ENCODE measurements at regions of chr3 and their contacts with region 1.

Region 1: DNA sequence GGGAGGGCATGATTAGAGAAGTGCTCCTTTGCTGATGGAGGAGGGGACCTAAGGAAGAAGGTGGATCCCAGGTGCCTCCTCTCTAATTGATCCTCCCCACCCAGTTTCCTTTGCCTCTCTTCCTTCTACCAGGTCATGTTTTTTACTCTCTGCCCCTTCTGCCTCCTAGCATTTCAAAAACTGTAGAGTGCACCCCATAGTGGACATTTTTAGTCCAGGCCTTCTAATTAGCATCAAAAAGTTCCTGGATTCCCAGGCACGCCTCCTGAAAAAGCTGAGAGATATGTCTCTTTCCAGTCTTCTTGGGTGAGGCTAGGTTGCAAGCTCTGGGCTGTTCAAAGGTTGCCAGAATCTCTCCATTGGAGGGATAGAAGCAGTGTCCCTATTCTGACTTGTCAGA is 18.7 kb upstream of the ITGB5 start:
- DNase-seq: no peak
- H3K4me3 ChIP-seq: no peak overlapping the region
- H3K4me3 Mint-ChIP-seq: no peak overlapping the region
- H3K27ac ChIP-seq: no peak overlapping the region
- H3K27ac Mint-ChIP-seq: peak overlapping the region in 1 of 7 donors; percentile 47
- H3K4me1 ChIP-seq: no peaks in the 10 kb centered on the region
- H3K4me1 Mint-ChIP-seq: peaks cover 1 to 6% (median 3%) of the 10 kb centered on the region in 4 donors
- H3K27me3 ChIP-seq: peaks cover 4% of the 10 kb centered on the region
- H3K27me3 Mint-ChIP-seq: peaks cover 7 to 13% of the 10 kb centered on the region in 2 donors

Region 2: GRCh38 chr3:124768812-124769211 is 137.0 kb before region 1 on chr3:
- CTCF ChIA-PET with region 1: interaction called, 291 read pairs
- POLR2A ChIA-PET with region 1: no interaction called
- intact Hi-C with region 1: no loop called
- DNase-seq: peak in 2 of 5 donors; percentile 7
- H3K4me3 ChIP-seq: no peak overlapping the region
- H3K4me3 Mint-ChIP-seq: no peak overlapping the region
- H3K27ac ChIP-seq: no peak overlapping the region
- H3K27ac Mint-ChIP-seq: no peak overlapping the region
- H3K4me1 ChIP-seq: no peaks in the 10 kb centered on the region
- H3K4me1 Mint-ChIP-seq: no peaks in the 10 kb centered on the region
- H3K27me3 ChIP-seq: peaks cover 4% of the 10 kb centered on the region
- H3K27me3 Mint-ChIP-seq: peaks cover 4 to 13% of the 10 kb centered on the region in 2 donors

Region 3: DNA sequence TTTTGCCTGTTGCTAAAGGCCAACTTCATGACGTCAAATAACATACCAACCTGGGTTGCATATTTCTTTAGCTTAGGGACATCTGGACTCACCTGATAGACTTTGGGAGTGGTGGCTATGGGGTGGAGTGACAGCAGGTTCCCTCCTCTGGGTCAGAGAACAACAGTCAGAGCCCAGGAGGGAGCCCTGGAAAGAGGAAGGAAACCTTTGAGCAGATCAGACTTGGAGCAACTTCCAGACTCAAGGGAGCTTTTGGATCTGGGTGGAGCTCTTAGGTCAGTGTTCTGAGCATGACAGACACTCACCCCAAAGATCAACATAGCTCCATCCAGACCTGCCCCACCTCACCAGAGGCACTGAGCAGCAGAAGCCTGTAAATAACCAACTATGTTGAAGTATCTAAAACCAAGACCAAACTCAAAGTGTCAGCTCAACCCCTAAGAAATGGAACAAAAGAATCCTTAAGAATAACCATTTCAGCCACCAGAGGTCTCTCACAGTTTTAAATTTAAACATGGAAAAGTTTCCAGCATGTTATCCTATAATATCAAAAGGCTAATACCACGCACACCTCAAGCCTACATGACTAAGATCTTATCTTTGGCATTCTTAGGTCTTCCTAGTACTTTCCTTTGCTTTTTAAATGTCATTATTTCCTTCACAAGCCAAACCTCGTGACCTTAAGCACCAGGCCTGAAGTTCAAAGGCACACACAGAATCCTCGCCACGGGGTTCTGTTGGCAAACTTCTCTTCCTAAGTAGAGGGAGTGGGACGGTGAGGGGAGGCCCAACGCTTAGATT is 119.2 kb before region 1 on chr3:
- CTCF ChIA-PET with region 1: interaction called, 48 read pairs
- POLR2A ChIA-PET with region 1: interaction called, 4 read pairs
- intact Hi-C with region 1: loop called (anchors 1 kb)
- DNase-seq: no peak
- H3K4me3 ChIP-seq: no peak overlapping the region
- H3K4me3 Mint-ChIP-seq: no peak overlapping the region
- H3K27ac ChIP-seq: no peak overlapping the region
- H3K27ac Mint-ChIP-seq: peak overlapping the region in 2 of 7 donors; percentile 22 to 62
- H3K4me1 ChIP-seq: no peaks in the 10 kb centered on the region
- H3K4me1 Mint-ChIP-seq: peaks cover 0 to 3% (median 0%) of the 10 kb centered on the region in 4 donors
- H3K27me3 ChIP-seq: no peaks in the 10 kb centered on the region
- H3K27me3 Mint-ChIP-seq: peaks cover 0 to 1% of the 10 kb centered on the region in 2 donors

Region 4: DNA sequence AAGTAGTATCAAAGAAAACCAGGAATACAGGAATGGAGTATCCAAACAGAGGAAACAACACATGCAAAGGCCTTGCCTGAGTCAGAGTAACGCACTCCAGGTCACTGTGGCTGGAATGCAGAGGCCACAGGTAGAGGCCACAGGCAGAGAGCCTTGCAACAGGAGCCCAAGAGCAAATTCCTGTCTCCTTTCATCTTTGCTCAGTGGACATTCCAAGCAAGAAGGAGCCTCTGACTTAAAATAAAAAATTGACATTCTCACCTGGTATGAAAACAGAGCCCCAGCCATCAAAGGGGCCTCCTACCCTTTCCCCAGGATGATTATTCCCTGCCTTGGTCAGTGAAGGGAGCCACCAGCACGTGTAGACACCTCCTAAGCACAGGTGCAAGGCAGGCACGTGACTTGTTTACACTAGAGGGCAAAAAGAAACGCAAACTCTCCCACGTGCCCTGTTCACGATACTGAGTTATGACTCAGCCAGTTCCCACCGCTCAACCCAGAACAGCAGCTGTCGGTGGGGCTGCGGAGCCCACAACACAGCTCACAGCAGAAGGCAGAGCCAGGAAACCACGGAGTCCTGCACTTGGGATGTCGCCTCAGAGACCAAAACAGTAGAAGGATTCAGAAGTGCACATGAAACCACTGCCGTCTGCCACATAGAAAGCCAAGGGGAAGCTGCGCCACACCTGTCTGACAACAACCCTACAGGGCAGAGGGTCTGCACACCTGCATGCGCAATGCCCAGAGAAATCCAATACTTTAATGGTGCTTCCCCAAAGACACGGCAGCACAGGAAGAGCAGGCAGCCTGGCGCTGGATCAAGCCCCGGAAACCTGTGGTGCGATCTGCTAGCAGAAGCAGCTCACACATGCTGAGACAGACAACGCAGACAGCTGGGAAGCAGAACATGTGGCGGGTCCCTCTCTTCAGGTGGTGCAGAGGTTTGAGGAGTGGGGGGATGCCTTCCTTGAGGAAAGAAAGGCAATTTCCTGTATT is 70.8 kb before region 1 on chr3:
- CTCF ChIA-PET with region 1: interaction called, 12 read pairs
- POLR2A ChIA-PET with region 1: interaction called, 4 read pairs
- intact Hi-C with region 1: loop called (anchors 1 kb)
- DNase-seq: peak; percentile 30 to 80 (median 49)
- H3K4me3 ChIP-seq: peak overlapping the region; percentile 38 to 46
- H3K4me3 Mint-ChIP-seq: peak overlapping the region; percentile 81 to 92 (median 87)
- H3K27ac ChIP-seq: peak overlapping the region; percentile 25
- H3K27ac Mint-ChIP-seq: peak overlapping the region; percentile 61 to 93 (median 85)
- H3K4me1 ChIP-seq: peaks cover 34% of the 10 kb centered on the region
- H3K4me1 Mint-ChIP-seq: peaks cover 13 to 35% (median 24%) of the 10 kb centered on the region in 4 donors
- H3K27me3 ChIP-seq: no peaks in the 10 kb centered on the region
- H3K27me3 Mint-ChIP-seq: peaks cover 4 to 9% of the 10 kb centered on the region in 2 donors

Region 5: DNA sequence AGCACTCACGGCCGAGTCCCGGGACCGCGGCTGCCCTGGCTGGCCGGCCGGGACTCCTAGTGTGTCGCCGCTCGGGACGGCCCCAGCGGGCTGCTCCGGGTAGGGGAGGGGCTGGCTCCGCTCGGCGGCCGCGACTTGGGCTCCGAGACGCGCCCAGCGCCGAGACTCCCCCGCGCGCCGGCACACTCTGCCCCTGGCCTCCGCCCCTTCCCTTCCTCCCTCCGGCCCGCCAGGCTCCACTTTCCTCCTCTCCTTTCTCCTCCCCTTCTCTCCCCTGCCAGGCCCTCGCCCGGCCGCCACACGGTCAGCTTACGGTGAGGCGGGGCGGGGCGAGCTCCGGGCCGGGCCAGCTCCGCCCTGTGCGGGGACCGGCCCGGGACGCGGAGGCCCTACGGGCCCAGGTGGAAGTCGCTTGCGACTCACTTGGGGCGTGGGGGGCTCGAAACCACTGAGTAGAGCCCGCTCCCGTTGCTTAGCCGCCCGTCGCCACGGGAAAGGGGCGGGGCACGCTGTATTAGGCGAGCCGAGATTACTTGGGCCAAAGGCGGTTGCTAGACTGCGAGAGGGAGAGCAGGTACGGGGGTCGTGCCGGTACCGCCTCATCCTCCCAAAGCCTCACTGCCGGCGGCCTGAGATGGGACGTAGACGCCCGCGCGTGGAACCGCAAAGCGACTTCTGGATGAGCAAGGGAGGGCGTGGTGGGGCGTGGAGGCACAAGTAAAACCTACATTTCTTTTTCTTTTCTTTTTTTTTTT is 18.5 kb before region 1 on chr3 and contains the start of gene ITGB5:
- CTCF ChIA-PET with region 1: interaction called, 29 read pairs
- POLR2A ChIA-PET with region 1: no interaction called
- intact Hi-C with region 1: no loop called
- DNase-seq: peak in 2 of 5 donors; percentile 5 to 11
- H3K4me3 ChIP-seq: peak within 1 kb of the TSS in 1 of 2 donors; percentile 49
- H3K4me3 Mint-ChIP-seq: peak within 1 kb of the TSS; percentile 51 to 80 (median 74)
- H3K27ac ChIP-seq: no peak within 1 kb of the TSS
- H3K27ac Mint-ChIP-seq: peak within 1 kb of the TSS in 1 of 7 donors; percentile 27
- H3K4me1 ChIP-seq: peaks cover 5% of the 10 kb centered on the region
- H3K4me1 Mint-ChIP-seq: peaks cover 5 to 11% (median 6%) of the 10 kb centered on the region in 4 donors
- H3K27me3 ChIP-seq: peaks cover 22% of the 10 kb centered on the region
- H3K27me3 Mint-ChIP-seq: peaks cover 20 to 22% of the 10 kb centered on the region in 2 donors
- total RNA-seq, gene ITGB5: 3.4 to 5.4 TPM